Activated naive CD4-positive, alpha-beta T cell treated with anti-CD3 and anti-CD28 coated beads for 36 hours (primary cell): ENCODE measurements at regions of chr16 and their contacts with region 1.

Region 1: GRCh38 chr16:684067-684794 is at the start of gene JMJD8:
- DNase-seq: peak; percentile 98
- H3K4me3 Mint-ChIP-seq: peak within 1 kb of the TSS; percentile 80
- H3K27ac Mint-ChIP-seq: peak within 1 kb of the TSS; percentile 46
- H3K4me1 Mint-ChIP-seq: peaks cover 42% of the 10 kb centered on the region
- H3K27me3 Mint-ChIP-seq: no peaks in the 10 kb centered on the region
- total RNA-seq, gene JMJD8: 18.2 to 20.5 TPM

Region 2: GRCh38 chr16:636206-637080 is 47.8 kb before region 1 on chr16 and contains the start of gene METTL26:
- CTCF ChIA-PET with region 1: no interaction called
- intact Hi-C with region 1: loop called (anchors 2 kb)
- DNase-seq: peak; percentile 95
- H3K4me3 Mint-ChIP-seq: peak within 1 kb of the TSS; percentile 90
- H3K27ac Mint-ChIP-seq: peak within 1 kb of the TSS; percentile 91
- H3K4me1 Mint-ChIP-seq: peaks cover 15% of the 10 kb centered on the region
- H3K27me3 Mint-ChIP-seq: no peaks in the 10 kb centered on the region
- total RNA-seq, gene METTL26: 121 to 122 TPM

Region 3: DNA sequence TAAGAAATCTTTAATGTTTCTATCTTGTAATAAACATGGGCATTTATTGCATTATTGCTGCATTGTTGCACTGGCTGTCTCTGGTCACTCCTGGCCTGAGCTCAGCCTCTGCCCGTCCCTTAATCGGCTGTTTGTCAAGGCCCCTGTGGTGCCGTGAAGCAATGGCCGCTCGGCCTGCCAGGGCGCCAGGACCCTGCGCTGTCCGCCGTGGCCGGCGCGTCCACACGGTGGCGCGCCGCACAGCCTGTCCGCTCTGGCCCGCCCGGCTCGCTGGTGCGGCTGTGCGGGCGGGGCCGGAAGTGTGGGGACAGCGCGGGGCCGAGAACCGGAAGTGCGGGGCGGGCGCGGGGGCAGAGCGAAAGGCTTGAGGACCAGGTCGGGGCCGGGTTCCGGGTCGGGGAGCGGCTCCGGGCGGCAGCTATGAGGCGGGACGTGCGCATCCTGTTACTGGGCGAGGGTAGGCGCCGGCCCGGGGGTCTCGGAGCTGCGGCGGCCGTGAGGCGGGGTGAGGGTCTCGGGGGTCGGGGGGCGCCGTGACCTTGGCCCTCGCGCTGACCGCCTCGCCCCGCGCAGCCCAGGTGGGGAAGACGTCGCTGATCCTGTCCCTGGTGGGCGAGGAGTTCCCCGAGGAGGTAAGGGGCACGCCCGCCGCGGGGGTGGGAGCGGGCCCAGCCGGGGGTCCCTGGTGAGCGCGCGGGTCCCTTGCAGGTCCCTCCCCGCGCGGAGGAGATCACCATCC is 16.3 kb before region 1 on chr16 and contains the start of gene RHOT2:
- CTCF ChIA-PET with region 1: no interaction called
- intact Hi-C with region 1: loop called (anchors 1 kb)
- DNase-seq: peak; percentile 94
- H3K4me3 Mint-ChIP-seq: peak within 1 kb of the TSS; percentile 78
- H3K27ac Mint-ChIP-seq: peak within 1 kb of the TSS; percentile 83
- H3K4me1 Mint-ChIP-seq: peaks cover 11% of the 10 kb centered on the region
- H3K27me3 Mint-ChIP-seq: no peaks in the 10 kb centered on the region
- total RNA-seq, gene RHOT2: 81.9 to 84.0 TPM

Region 4: DNA sequence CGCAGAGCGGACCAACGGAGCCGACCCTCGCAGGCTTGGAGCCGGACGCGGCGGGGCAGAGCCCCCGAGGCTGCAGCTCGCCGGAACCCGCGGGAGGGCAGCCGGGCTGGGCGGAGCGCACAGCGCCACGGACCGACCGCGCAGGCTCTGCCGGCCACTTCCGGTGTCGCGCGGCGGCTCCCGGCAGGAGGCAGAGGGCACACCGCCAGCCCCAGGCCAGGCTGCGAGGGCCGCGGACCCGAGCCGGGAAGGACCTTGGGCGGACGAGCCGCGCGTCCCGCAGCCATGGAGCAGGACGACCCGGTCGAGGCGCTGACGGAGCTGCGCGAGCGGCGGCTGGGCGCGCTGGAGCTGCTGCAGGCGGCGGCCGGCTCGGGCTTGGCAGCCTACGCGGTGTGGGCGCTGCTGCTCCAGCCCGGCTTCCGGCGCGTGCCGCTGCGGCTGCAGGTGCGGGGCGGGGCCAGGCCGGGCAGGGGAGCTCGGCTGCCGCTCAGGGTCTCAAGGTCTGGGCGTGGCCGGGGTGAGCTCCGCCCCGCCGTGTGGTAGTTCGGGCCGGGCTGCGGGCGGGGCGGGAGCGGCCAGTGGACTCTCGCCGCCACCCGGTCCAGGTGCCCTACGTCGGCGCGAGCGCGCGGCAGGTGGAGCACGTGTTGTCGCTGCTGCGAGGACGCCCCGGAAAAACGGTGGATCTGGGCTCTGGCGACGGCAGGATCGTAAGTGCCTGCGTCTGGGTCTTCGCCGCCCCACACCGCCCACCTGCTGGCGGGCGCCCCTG is 36.9 kb after region 1 on chr16 and contains the start of gene ANTKMT:
- CTCF ChIA-PET with region 1: no interaction called
- intact Hi-C with region 1: loop called (anchors 5 kb)
- DNase-seq: peak; percentile 76
- H3K4me3 Mint-ChIP-seq: peak within 1 kb of the TSS; percentile 82
- H3K27ac Mint-ChIP-seq: peak within 1 kb of the TSS; percentile 69
- H3K4me1 Mint-ChIP-seq: peaks cover 17% of the 10 kb centered on the region
- H3K27me3 Mint-ChIP-seq: no peaks in the 10 kb centered on the region
- total RNA-seq, gene ANTKMT: 21.5 to 24.3 TPM

Region 5: DNA sequence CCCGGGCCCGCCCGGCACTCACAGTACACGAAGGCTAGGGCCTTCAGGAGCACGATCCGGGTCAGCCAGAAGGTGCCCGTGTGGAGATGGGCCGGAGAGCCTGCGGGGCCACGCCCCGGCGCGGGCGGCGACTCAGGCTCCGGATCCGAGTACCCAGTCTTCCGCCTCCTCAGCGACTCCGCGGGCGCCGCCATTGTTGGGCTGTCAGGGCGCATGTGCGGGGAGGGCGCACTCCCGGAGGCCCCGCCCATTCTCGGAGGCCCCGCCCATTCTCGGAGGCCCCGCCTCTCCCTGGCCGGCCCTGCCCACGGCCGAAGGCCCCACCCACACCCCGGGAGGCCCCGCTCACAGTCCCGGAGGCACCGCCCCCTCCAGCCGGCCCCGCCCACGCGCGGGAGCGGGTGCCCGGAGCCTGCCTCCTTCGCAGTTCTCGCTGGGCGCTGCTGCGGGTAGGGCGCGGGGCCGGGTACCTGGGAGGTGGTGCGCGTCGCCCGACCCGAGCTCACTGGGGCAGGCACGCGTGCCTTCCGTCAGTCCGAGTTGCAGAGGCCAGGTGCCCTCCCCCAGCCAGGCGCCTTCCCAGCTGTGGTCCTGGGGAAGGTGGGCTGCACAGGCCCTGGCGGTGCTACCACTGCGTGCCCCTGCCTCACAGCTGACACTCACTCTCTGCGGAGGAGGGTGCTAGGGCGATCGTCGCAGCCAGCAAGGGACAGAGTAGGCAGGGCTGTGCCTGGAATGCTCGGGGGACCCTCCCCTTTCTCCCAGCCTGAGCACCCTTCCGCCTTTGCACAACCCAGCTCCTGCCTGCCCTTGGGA is 286.7 kb after region 1 on chr16 and contains the start of gene LMF1:
- CTCF ChIA-PET with region 1: no interaction called
- intact Hi-C with region 1: loop called (anchors 2 kb)
- DNase-seq: peak; percentile 96
- H3K4me3 Mint-ChIP-seq: peak within 1 kb of the TSS; percentile 78
- H3K27ac Mint-ChIP-seq: peak within 1 kb of the TSS; percentile 41
- H3K4me1 Mint-ChIP-seq: peaks cover 21% of the 10 kb centered on the region
- H3K27me3 Mint-ChIP-seq: no peaks in the 10 kb centered on the region
- total RNA-seq, gene LMF1: 11.5 to 12.3 TPM